Right ventricle myocardium inferior (tissue), 1 donor: ENCODE measurements at regions of chr1 and their contacts with region 1.

Region 1: GRCh38 chr1:87953732-87954344 is 625.2 kb downstream of the LMO4 start:
- DNase-seq: no peak
- ATAC-seq: peak; percentile 76

Region 2: GRCh38 chr1:87292684-87293493 is 660.9 kb before region 1 on chr1:
- intact Hi-C with region 1: loop called (anchors 10 kb)
- DNase-seq: no peak
- ATAC-seq: no peak

Region 3: GRCh38 chr1:88509366-88509765 is 555.5 kb after region 1 on chr1:
- intact Hi-C with region 1: no loop called
- DNase-seq: no peak
- ATAC-seq: no peak